Caco-2 (cell line): ENCODE measurements at regions of chr11 and their contacts with region 1.

Region 1: GRCh38 chr11:73393479-73394380 is 17.5 kb downstream of the RELT start:
- DNase-seq: peak; percentile 85 to 89
- H3K4me3 ChIP-seq: no peak overlapping the region
- H3K4me3 Mint-ChIP-seq: no peak overlapping the region
- H3K27ac Mint-ChIP-seq: no peak overlapping the region
- H3K4me1 ChIP-seq: no peaks in the 10 kb centered on the region
- H3K4me1 Mint-ChIP-seq: no peaks in the 10 kb centered on the region
- H3K27me3 ChIP-seq: no peaks in the 10 kb centered on the region
- H3K27me3 Mint-ChIP-seq: no peaks in the 10 kb centered on the region
- CTCF ChIP-seq: peak; percentile 92 to 97

Region 2: DNA sequence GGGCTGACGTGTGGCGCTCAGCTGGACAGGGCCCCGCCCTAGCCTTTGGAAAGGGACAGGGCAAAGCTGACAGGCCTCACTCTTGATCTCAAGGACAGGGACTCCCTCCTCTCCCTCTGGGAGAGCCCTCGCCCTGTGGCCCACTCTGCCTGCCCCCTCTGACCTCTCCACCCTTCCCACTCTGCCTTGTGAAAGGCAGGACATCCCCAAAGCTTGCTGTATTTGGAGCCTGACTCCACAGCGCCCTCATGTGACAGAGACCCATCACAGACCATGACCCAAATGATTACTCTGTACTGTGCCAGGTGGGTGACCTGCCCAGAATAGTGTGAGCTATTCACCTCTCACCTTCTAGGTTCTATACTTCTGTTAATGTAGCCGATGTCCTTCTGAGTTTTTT is 156.9 kb before region 1 on chr11:
- CTCF ChIA-PET with region 1: no interaction called
- POLR2A ChIA-PET with region 1: no interaction called
- intact Hi-C with region 1: no loop called
- DNase-seq: peak; percentile 77 to 81
- H3K4me3 ChIP-seq: no peak overlapping the region
- H3K4me3 Mint-ChIP-seq: no peak overlapping the region
- H3K27ac Mint-ChIP-seq: peak overlapping the region; percentile 32
- H3K4me1 ChIP-seq: peaks cover 4% of the 10 kb centered on the region; the same call in 1 of the 2 replicates
- H3K4me1 Mint-ChIP-seq: peaks cover under 1% of the 10 kb centered on the region
- H3K27me3 ChIP-seq: no peaks in the 10 kb centered on the region
- H3K27me3 Mint-ChIP-seq: no peaks in the 10 kb centered on the region
- CTCF ChIP-seq: peak; percentile 75 to 92

Region 3: GRCh38 chr11:73376160-73376802 is 17.4 kb before region 1 on chr11 and contains the start of gene RELT:
- CTCF ChIA-PET with region 1: interaction called, 15 read pairs
- POLR2A ChIA-PET with region 1: interaction called, 6 read pairs
- intact Hi-C with region 1: loop called (anchors 1 kb)
- DNase-seq: peak; percentile 92 to 99
- H3K4me3 ChIP-seq: peak within 1 kb of the TSS; percentile 91
- H3K4me3 Mint-ChIP-seq: peak within 1 kb of the TSS; percentile 83
- H3K27ac Mint-ChIP-seq: peak within 1 kb of the TSS; percentile 37
- H3K4me1 ChIP-seq: peaks cover 11% of the 10 kb centered on the region; the same call in 1 of the 2 replicates
- H3K4me1 Mint-ChIP-seq: peaks cover 18% of the 10 kb centered on the region
- H3K27me3 ChIP-seq: no peaks in the 10 kb centered on the region
- H3K27me3 Mint-ChIP-seq: no peaks in the 10 kb centered on the region
- CTCF ChIP-seq: peak; percentile 96 to 98
- total RNA-seq, gene RELT: 11.7 and 12.7 TPM in 2 replicates

Region 4: DNA sequence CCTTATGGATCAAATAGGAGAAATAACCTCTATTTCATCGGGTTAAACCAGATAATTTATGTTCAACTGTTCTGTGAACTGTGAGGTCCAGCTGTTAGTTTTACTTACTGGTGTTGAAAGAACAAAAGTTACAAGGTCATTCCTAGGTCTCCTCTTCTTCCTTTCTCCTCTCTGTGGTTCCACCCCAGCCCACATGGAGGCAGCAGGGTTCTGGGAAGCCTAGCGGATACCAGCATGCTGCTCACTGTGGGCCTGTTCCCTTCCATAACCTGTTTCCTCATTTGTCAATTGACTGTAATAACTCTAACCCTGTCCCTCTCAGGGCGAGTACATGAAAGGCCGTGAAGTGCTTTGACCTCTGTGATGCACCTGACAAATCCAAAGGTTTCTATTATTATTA is 10.3 kb after region 1 on chr11:
- CTCF ChIA-PET with region 1: interaction called, 13 read pairs
- POLR2A ChIA-PET with region 1: no interaction called
- intact Hi-C with region 1: no loop called
- DNase-seq: peak; percentile 81 to 85
- H3K4me3 ChIP-seq: no peak overlapping the region
- H3K4me3 Mint-ChIP-seq: no peak overlapping the region
- H3K27ac Mint-ChIP-seq: no peak overlapping the region
- H3K4me1 ChIP-seq: no peaks in the 10 kb centered on the region
- H3K4me1 Mint-ChIP-seq: no peaks in the 10 kb centered on the region
- H3K27me3 ChIP-seq: no peaks in the 10 kb centered on the region
- H3K27me3 Mint-ChIP-seq: no peaks in the 10 kb centered on the region
- CTCF ChIP-seq: peak; percentile 71 to 93